ENCODE measurements at regions of chr18 and their contacts with region 1.

Region 1: DNA sequence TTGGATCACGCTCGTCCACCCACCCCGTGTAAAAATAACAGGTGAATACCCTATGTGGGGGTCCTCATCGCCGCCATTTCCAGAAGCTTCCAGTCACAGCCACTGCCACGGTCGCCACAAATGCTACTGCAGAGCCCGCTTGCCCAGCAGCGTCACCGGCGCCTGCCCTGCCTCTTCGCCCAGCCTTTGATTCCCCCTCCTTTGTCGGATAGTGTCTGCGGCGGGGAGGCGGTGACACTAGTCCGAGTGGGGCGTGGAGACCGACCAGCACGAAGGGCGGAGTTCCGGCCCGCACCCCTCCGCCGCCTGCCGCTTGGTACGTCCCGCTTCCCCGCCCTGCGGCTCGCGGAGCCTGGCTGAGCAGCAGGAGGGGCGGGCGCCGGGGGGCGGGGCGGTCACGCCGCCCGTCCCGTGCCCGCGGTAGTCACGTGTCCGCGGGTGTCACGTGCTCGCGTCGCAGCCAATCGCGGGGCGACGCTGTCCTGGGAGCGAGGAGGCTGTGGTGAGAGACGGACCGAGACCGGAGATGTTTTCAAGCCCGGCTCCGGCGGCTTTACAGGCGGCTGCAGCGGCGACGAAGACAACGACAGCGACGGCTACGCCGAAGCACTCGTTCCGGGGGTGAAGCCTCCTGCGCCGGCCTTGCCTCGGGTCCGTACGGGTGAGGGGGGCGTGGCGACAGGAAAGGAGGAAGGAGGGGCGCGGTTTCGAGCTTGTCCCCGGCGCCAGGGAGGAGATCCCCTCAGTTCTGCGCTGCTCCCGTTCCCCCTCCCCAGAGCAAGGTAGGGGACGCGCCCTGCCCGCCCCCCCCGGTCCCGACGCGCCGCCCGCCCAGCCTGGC is at the start of gene ANKRD12:
- DNase-seq: peak; percentile 99
- ATAC-seq: peak; percentile 78 to 95 (median 82)
- H3K4me3 ChIP-seq: peak within 1 kb of the TSS; percentile 99
- H3K4me3 Mint-ChIP-seq: peak within 1 kb of the TSS; percentile 97
- H3K27ac ChIP-seq: peak within 1 kb of the TSS; percentile 96
- H3K27ac Mint-ChIP-seq: peak within 1 kb of the TSS; percentile 97 to 98
- H3K4me1 ChIP-seq: peaks cover 16% of the 10 kb centered on the region
- H3K4me1 Mint-ChIP-seq: peaks cover 47 to 58% of the 10 kb centered on the region in 2 donors
- H3K27me3 ChIP-seq: no peaks in the 10 kb centered on the region
- H3K27me3 Mint-ChIP-seq: no peaks in the 10 kb centered on the region
- CTCF ChIP-seq: no peak
- total RNA-seq, gene ANKRD12: 136 to 148 (median 141) TPM

Region 2: DNA sequence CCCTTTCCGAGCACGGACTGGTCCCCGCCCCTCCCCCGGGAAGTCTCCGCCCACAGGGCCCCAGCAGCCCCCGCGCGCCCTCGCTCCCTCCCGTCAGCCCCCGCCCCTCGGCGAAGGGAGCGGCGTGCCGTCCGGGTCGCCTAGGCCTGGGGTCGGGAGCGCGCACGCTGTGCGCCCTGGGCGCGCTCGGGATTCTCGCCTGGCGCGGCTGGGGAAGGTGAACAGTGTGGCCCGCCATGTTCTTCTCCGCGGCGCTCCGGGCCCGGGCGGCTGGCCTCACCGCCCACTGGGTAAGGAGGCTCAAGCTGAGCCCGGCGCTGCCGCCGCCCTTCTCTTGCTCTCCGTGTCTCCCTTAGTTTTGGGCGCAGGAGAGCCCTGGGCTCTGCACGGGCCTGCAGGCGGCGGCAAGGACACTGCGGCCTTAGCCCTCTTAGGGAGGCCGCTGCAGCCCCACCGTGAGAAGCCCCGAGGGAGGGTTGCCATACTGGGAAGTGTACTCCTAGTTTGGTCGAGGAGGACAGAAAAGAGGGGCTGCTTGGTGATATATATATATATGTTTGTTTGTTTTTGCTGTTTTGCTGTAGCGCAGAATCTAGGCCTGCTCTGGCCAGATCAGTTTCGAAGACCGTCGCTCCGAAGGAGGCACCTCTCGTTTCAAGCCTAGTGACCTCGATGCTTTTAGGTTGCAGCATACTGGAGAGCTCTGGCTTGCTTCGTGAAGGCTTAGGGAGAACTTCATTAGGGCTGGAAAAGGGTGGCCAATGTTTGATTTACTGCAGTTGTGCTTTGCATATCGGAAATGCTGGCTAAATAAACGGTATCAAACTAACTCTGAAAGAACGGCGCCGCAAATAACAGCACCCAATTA is 33.8 kb before region 1 on chr18 and contains the start of gene NDUFV2:
- intact Hi-C with region 1: loop called (anchors 1 kb)
- DNase-seq: peak; percentile 97 to 98
- ATAC-seq: peak; percentile 91 to 99 (median 93)
- H3K4me3 ChIP-seq: peak within 1 kb of the TSS; percentile 74
- H3K4me3 Mint-ChIP-seq: peak within 1 kb of the TSS; percentile 96
- H3K27ac ChIP-seq: peak within 1 kb of the TSS; percentile 90
- H3K27ac Mint-ChIP-seq: peak within 1 kb of the TSS; percentile 85 to 98
- H3K4me1 ChIP-seq: peaks cover 12% of the 10 kb centered on the region
- H3K4me1 Mint-ChIP-seq: peaks cover 61% of the 10 kb centered on the region in 2 donors
- H3K27me3 ChIP-seq: no peaks in the 10 kb centered on the region
- H3K27me3 Mint-ChIP-seq: no peaks in the 10 kb centered on the region
- CTCF ChIP-seq: no peak
- total RNA-seq, gene NDUFV2: 137 to 188 (median 154) TPM

Region 3: DNA sequence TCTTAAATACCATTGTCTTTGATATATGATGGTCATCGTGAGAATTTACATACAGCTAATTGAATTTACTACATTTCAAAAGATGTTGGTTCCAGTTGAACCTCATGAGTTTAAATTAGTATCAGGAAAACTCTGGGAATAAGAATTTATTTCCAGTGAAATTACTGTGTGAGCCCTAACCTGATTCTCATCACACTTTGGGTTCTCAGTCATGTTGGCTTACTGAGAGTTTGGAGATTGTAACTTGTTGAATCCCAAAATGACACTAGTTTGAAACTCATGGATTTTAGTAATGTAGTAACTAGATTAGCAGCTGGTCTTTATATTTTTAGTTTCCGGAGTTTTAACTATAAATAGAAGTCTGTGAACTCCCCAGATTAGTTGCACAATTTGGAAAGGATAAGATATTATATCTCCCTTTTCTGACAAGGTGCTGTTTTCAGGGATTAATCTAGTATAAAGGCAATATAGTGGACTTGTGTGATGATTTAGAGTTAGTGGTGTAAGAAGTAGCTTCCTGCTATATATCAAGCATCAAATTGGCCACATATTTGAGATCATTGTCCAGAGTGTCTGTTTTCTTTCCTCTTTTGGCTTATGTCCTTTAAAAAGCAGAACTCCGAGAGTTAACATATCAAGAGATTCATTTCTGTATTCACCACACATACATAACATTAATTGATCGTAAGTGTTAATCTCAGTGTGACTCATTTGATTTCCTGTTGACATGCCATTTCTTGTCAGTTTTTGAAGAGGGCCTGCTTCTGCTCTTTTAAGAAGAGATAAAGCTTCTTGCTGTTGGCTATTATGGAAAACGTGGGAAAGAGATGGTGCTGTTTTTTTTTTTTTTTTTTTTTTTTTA is 18.3 kb before region 1 on chr18:
- intact Hi-C with region 1: loop called (anchors 1 kb)
- DNase-seq: peak in 1 of 2 donors; percentile 73
- ATAC-seq: peak; percentile 64 to 74 (median 64)
- H3K4me3 ChIP-seq: no peak overlapping the region
- H3K4me3 Mint-ChIP-seq: peak overlapping the region; percentile 63
- H3K27ac ChIP-seq: peak overlapping the region; percentile 88
- H3K27ac Mint-ChIP-seq: peak overlapping the region; percentile 90 to 96
- H3K4me1 ChIP-seq: peaks cover 19% of the 10 kb centered on the region
- H3K4me1 Mint-ChIP-seq: peaks cover 50 to 57% of the 10 kb centered on the region in 2 donors
- H3K27me3 ChIP-seq: no peaks in the 10 kb centered on the region
- H3K27me3 Mint-ChIP-seq: no peaks in the 10 kb centered on the region
- CTCF ChIP-seq: no peak

Region 4: DNA sequence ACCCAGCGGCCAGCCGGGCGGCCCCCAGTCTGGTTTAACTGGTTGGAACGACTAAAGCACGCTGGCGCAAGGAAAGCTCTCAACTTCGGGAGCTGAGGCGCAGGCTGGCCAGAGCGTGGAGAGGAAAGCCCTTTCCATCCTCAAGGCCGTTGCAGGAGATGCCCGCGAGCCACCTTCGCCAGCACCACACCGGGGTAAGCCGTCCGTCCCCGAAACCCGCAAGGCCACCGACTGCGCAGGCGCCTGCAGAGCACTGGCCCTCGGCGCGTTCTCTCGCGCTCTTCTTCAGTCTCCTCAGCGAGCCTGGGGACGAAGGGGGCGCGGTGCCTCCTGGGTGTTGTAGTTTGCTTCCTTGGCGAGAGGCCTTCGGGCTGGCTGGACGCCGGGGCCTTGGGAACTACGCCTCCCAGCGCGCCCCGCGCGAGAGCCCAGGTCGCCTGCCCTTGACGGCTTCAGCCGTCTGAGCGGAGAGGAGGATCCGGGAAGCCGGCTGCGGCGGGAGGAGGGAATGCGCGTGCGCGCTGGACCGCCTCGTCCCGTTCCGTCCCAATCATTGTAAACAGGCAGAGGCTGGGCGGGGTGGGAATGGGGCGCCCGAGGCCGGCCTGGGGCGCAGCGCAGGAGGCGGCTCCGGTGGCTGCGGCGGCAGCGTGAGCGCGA is 338.6 kb after region 1 on chr18 and contains the start of gene RALBP1:
- intact Hi-C with region 1: loop called (anchors 5 kb)
- DNase-seq: peak; percentile 96 to 98
- ATAC-seq: peak; percentile 96 to 100 (median 98)
- H3K4me3 ChIP-seq: peak within 1 kb of the TSS; percentile 79
- H3K4me3 Mint-ChIP-seq: peak within 1 kb of the TSS; percentile 99
- H3K27ac ChIP-seq: peak within 1 kb of the TSS; percentile 86
- H3K27ac Mint-ChIP-seq: peak within 1 kb of the TSS; percentile 88 to 98
- H3K4me1 ChIP-seq: peaks cover 23% of the 10 kb centered on the region
- H3K4me1 Mint-ChIP-seq: peaks cover 28 to 38% of the 10 kb centered on the region in 2 donors
- H3K27me3 ChIP-seq: peaks cover 4% of the 10 kb centered on the region
- H3K27me3 Mint-ChIP-seq: peaks cover 17 to 31% of the 10 kb centered on the region in 2 donors
- CTCF ChIP-seq: no peak
- total RNA-seq, gene RALBP1: 27.3 to 40.0 (median 33.4) TPM